MCF 10A (cell line): ENCODE measurements at regions of chr7 and their contacts with region 1.

Region 1: GRCh38 chr7:56074371-56074791 is 10.3 kb downstream of the SUMF2 start:
- DNase-seq: peak; percentile 90
- H3K4me3 Mint-ChIP-seq: no peak overlapping the region
- H3K27ac Mint-ChIP-seq: peak overlapping the region; percentile 13
- H3K4me1 Mint-ChIP-seq: peaks cover 16% of the 10 kb centered on the region
- H3K27me3 Mint-ChIP-seq: no peaks in the 10 kb centered on the region
- CTCF ChIP-seq: peak; percentile 92

Region 2: GRCh38 chr7:55641273-55641691 is 433.1 kb before region 1 on chr7:
- CTCF ChIA-PET with region 1: interaction called, 75 read pairs
- POLR2A ChIA-PET with region 1: no interaction called
- intact Hi-C with region 1: loop called (anchors 2 kb)
- DNase-seq: peak; percentile 84
- H3K4me3 Mint-ChIP-seq: no peak overlapping the region
- H3K27ac Mint-ChIP-seq: no peak overlapping the region
- H3K4me1 Mint-ChIP-seq: no peaks in the 10 kb centered on the region
- H3K27me3 Mint-ChIP-seq: no peaks in the 10 kb centered on the region
- CTCF ChIP-seq: peak; percentile 64

Region 3: GRCh38 chr7:55931421-55932151 is 142.8 kb before region 1 on chr7:
- CTCF ChIA-PET with region 1: no interaction called
- POLR2A ChIA-PET with region 1: no interaction called
- intact Hi-C with region 1: no loop called
- DNase-seq: no peak
- H3K4me3 Mint-ChIP-seq: no peak overlapping the region
- H3K27ac Mint-ChIP-seq: no peak overlapping the region
- H3K4me1 Mint-ChIP-seq: no peaks in the 10 kb centered on the region
- H3K27me3 Mint-ChIP-seq: no peaks in the 10 kb centered on the region
- CTCF ChIP-seq: no peak

Region 4: GRCh38 chr7:55964261-55965099 is 109.9 kb before region 1 on chr7 and contains the start of gene NIPSNAP2:
- CTCF ChIA-PET with region 1: interaction called, 5 read pairs
- POLR2A ChIA-PET with region 1: interaction called, 8 read pairs
- intact Hi-C with region 1: loop called (anchors 1 kb)
- DNase-seq: peak; percentile 49
- H3K4me3 Mint-ChIP-seq: peak within 1 kb of the TSS; percentile 70
- H3K27ac Mint-ChIP-seq: peak within 1 kb of the TSS; percentile 78
- H3K4me1 Mint-ChIP-seq: peaks cover 25% of the 10 kb centered on the region
- H3K27me3 Mint-ChIP-seq: no peaks in the 10 kb centered on the region
- CTCF ChIP-seq: peak; percentile 49
- total RNA-seq, gene NIPSNAP2: 57.9 and 62.8 TPM in 2 replicates

Region 5: GRCh38 chr7:56009695-56010094 is 64.7 kb before region 1 on chr7:
- CTCF ChIA-PET with region 1: interaction called, 19 read pairs
- POLR2A ChIA-PET with region 1: interaction called, 3 read pairs
- intact Hi-C with region 1: loop called (anchors 1 kb)
- DNase-seq: peak; percentile 95
- H3K4me3 Mint-ChIP-seq: peak overlapping the region; percentile 44
- H3K27ac Mint-ChIP-seq: peak overlapping the region; percentile 77
- H3K4me1 Mint-ChIP-seq: peaks cover 14% of the 10 kb centered on the region
- H3K27me3 Mint-ChIP-seq: no peaks in the 10 kb centered on the region
- CTCF ChIP-seq: no peak

Region 6: GRCh38 chr7:56063882-56064625 is 10.3 kb before region 1 on chr7 and contains the start of gene SUMF2:
- CTCF ChIA-PET with region 1: interaction called, 14 read pairs
- POLR2A ChIA-PET with region 1: interaction called, 24 read pairs
- intact Hi-C with region 1: no loop called
- DNase-seq: peak; percentile 90
- H3K4me3 Mint-ChIP-seq: peak within 1 kb of the TSS; percentile 82
- H3K27ac Mint-ChIP-seq: peak within 1 kb of the TSS; percentile 84
- H3K4me1 Mint-ChIP-seq: peaks cover 30% of the 10 kb centered on the region
- H3K27me3 Mint-ChIP-seq: no peaks in the 10 kb centered on the region
- CTCF ChIP-seq: no peak
- total RNA-seq, gene SUMF2: 142 and 159 TPM in 2 replicates